A549 (cell line): ENCODE measurements at regions of chr19 and their contacts with region 1.

Region 1: GRCh38 chr19:3304871-3305423 is 61.4 kb upstream of the NFIC start:
- DNase-seq: peak; percentile 62 to 72
- ATAC-seq: peak; percentile 54 to 75; a peak in 4 of 6 replicates
- H3K4me3 ChIP-seq: no peak overlapping the region
- H3K27ac ChIP-seq: peak overlapping the region; percentile 42 to 59; a peak in 3 of 6 replicates
- H3K4me1 ChIP-seq: 0 out of 3 replicates have a peak, but pooled peaks cover 3% of the 10 kb centered on the region
- CTCF ChIP-seq: peak; percentile 72
- EP300 ChIP-seq: no peak
- POLR2A ChIP-seq: no peak
- RAD21 ChIP-seq: peak; percentile 79 to 81

Region 2: GRCh38 chr19:3210347-3211017 is 94.5 kb before region 1 on chr19:
- CTCF ChIA-PET with region 1: no interaction called
- POLR2A ChIA-PET with region 1: no interaction called
- DNase-seq: peak; percentile 35 to 60
- ATAC-seq: peak; percentile 78 to 86
- H3K4me3 ChIP-seq: no peak overlapping the region
- H3K27ac ChIP-seq: no peak overlapping the region
- H3K4me1 ChIP-seq: no peaks in the 10 kb centered on the region
- CTCF ChIP-seq: peak; percentile 43
- EP300 ChIP-seq: no peak
- POLR2A ChIP-seq: no peak
- RAD21 ChIP-seq: peak in 1 of 2 experiments; percentile 29; a peak in 1 of 5 replicates

Region 3: DNA sequence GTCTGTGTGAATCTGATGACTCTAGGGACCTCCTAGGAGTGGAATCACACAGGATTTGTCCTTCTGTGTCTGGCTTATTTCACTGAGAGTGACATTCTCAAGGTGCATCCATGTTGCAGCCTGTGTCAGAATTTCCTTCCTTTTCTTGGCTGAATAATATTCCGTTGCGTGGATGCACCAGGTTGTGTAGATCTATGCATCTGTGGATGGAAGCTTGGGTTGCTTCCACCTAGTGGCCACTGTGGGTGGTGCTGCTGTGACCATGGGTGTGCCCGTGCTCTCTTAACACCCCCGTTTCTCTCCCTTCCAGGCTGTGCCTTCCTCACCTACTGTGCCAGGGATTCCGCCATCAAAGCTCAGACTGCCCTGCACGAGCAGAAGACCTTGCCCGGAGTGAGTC is 54.3 kb before region 1 on chr19:
- CTCF ChIA-PET with region 1: no interaction called
- POLR2A ChIA-PET with region 1: no interaction called
- DNase-seq: peak in 1 of 2 experiments; percentile 48
- ATAC-seq: peak; percentile 70 to 83; a peak in 4 of 6 replicates
- H3K4me3 ChIP-seq: no peak overlapping the region
- H3K27ac ChIP-seq: no peak overlapping the region
- H3K4me1 ChIP-seq: no peaks in the 10 kb centered on the region
- CTCF ChIP-seq: peak; percentile 37
- EP300 ChIP-seq: no peak
- POLR2A ChIP-seq: no peak
- RAD21 ChIP-seq: peak in 1 of 2 experiments; percentile 17; a peak in 1 of 5 replicates

Region 4: GRCh38 chr19:3289971-3290569 is 14.9 kb before region 1 on chr19:
- CTCF ChIA-PET with region 1: interaction called, 39 read pairs
- POLR2A ChIA-PET with region 1: no interaction called
- DNase-seq: peak in 1 of 2 experiments; percentile 42
- ATAC-seq: peak in 1 of 2 experiments; percentile 18; a peak in 3 of 6 replicates
- H3K4me3 ChIP-seq: peak overlapping the region; percentile 25; the same call in 2 of the 3 replicates
- H3K27ac ChIP-seq: peak overlapping the region in 1 of 2 experiments; percentile 22; a peak in 3 of 6 replicates
- H3K4me1 ChIP-seq: no peaks in the 10 kb centered on the region
- CTCF ChIP-seq: no peak
- EP300 ChIP-seq: no peak
- POLR2A ChIP-seq: no peak
- RAD21 ChIP-seq: no peak

Region 5: GRCh38 chr19:3324321-3324856 is 19.4 kb after region 1 on chr19:
- CTCF ChIA-PET with region 1: interaction called, 18 read pairs
- POLR2A ChIA-PET with region 1: no interaction called
- DNase-seq: peak in 1 of 2 experiments; percentile 57
- ATAC-seq: peak; percentile 68 to 82; a peak in 4 of 6 replicates
- H3K4me3 ChIP-seq: no peak overlapping the region
- H3K27ac ChIP-seq: no peak overlapping the region
- H3K4me1 ChIP-seq: no peaks in the 10 kb centered on the region
- CTCF ChIP-seq: peak; percentile 50
- EP300 ChIP-seq: no peak
- POLR2A ChIP-seq: no peak
- RAD21 ChIP-seq: peak in 1 of 2 experiments; percentile 38; a peak in 2 of 5 replicates

Region 6: GRCh38 chr19:3350014-3350663 is 45.2 kb after region 1 on chr19:
- CTCF ChIA-PET with region 1: no interaction called
- POLR2A ChIA-PET with region 1: no interaction called
- DNase-seq: no peak
- ATAC-seq: no peak
- H3K4me3 ChIP-seq: no peak overlapping the region
- H3K27ac ChIP-seq: peak overlapping the region; percentile 21 to 44; a peak in 2 of 6 replicates
- H3K4me1 ChIP-seq: peaks cover 17% of the 10 kb centered on the region
- CTCF ChIP-seq: no peak
- EP300 ChIP-seq: no peak
- POLR2A ChIP-seq: no peak
- RAD21 ChIP-seq: no peak